ENCODE measurements at regions of chr12 and their contacts with region 1.

Region 1: DNA sequence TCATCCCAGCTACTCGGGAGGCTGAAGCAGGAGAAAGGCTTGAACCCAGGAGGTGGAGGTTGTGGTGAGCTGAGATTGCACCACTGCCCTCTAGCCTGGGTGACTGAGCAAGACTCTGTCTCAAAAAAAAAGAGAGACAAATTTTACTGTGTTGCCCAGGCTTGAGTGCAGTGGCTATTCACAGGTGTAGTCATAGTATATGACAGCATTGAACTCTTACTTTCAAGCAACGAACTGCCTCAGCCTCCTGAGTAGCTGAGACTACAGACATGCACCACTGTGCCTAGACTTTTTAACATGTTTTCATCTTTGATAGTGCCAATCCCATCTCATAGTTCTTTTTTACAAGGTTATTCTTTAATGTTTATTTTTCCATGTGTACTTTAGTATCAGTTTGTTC is 13.7 kb downstream of the ARID2 start:
- DNase-seq: no peak

Region 2: DNA sequence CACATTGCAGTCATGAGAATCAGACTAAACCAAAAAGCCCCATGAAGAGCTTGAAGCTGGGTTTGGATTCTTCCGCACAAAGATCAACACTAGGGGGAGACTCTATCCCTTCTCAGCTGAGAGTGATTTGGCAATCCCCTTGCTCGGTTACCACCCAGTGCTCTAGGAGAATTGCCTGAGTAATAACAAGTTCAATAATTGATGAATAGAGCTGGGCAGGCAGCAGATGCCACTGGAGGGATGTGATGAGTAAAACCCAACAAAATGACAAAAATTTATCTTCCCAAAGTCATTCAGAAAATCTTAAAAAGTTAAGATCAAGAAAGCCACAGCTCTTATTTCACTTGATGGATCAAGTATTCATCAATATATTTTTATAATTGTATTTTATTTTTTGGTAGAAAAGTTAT is 199.3 kb before region 1 on chr12:
- intact Hi-C with region 1: loop called (anchors 5 kb)
- DNase-seq: no peak

Region 3: DNA sequence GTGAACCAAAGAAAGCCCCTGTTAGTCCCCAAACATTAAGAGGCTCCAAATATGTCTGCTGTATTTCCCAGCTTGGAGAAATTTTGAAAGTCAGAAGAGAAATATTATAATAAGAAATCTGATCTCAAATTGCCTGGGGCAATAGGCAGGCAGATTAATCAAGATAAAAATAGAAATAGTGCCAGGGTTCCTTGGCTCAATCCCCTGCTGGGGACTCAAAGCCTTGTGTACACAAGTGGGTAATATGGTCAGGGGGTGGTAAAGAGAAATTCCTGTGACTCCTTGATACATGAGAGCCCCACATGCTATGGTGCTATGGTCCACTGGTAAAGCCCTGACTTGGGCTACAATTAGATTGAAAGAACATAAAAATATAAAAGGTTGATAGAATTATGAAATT is 55.1 kb before region 1 on chr12:
- intact Hi-C with region 1: no loop called
- DNase-seq: no peak